Breast epithelium (tissue), 4 donors: ENCODE measurements at regions of chr3 and their contacts with region 1.

Region 1: GRCh38 chr3:42749753-42750231 is 23.3 kb downstream of the CCDC13 start:
- DNase-seq: no peak
- H3K4me3 ChIP-seq: no peak overlapping the region
- H3K27ac ChIP-seq: no peak overlapping the region
- H3K4me1 ChIP-seq: no peaks in the 10 kb centered on the region
- H3K27me3 ChIP-seq: no peaks in the 10 kb centered on the region
- CTCF ChIP-seq: no peak
- POLR2A ChIP-seq: no peak

Region 2: GRCh38 chr3:41881233-41881821 is 868.5 kb before region 1 on chr3:
- intact Hi-C with region 1: no loop called
- DNase-seq: no peak
- H3K4me3 ChIP-seq: no peak overlapping the region
- H3K27ac ChIP-seq: no peak overlapping the region
- H3K4me1 ChIP-seq: no peaks in the 10 kb centered on the region
- H3K27me3 ChIP-seq: no peaks in the 10 kb centered on the region
- CTCF ChIP-seq: peak; percentile 43 to 68 (median 68)
- POLR2A ChIP-seq: no peak

Region 3: GRCh38 chr3:44136421-44136820 is 1386.6 kb after region 1 on chr3:
- intact Hi-C with region 1: loop called (anchors 5 kb)
- DNase-seq: no peak
- H3K4me3 ChIP-seq: no peak overlapping the region
- H3K27ac ChIP-seq: no peak overlapping the region
- H3K4me1 ChIP-seq: no peaks in the 10 kb centered on the region
- H3K27me3 ChIP-seq: no peaks in the 10 kb centered on the region
- CTCF ChIP-seq: no peak
- POLR2A ChIP-seq: no peak